CD4-positive, alpha-beta T cell (primary cell): ENCODE measurements at regions of chr4 and their contacts with region 1.

Region 1: DNA sequence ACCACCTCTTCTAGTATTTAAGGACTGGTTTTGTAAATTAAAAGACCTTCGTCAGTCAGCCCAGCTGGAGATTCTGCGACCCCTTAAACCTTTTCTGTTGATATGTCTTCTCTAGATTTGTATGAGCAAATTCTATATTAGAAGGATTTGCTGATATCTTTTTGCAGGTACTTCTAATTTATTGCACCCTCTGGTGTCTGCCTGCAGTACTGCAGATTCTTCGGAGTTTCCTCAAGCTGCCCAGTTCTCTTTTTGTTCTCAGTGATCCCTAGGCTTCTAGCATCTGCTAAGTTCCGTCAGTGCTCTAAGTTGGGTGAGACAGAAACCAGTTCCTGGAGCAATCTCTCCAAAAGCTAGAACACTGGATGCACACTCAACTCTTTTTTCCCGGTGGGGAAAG is 545.2 kb downstream of the C4orf33 start:
- DNase-seq: peak in 12 of 14 experiments; percentile 1 to 48 (median 15)
- ATAC-seq: no peak
- H3K4me3 ChIP-seq: no peak overlapping the region
- H3K4me3 Mint-ChIP-seq: no peak overlapping the region
- H3K27ac ChIP-seq: no peak overlapping the region
- H3K27ac Mint-ChIP-seq: no peak overlapping the region
- H3K4me1 ChIP-seq: no peaks in the 10 kb centered on the region
- H3K4me1 Mint-ChIP-seq: no peaks in the 10 kb centered on the region
- H3K27me3 ChIP-seq: no peaks in the 10 kb centered on the region
- H3K27me3 Mint-ChIP-seq: no peaks in the 10 kb centered on the region
- CTCF ChIP-seq: peak; percentile 66

Region 2: DNA sequence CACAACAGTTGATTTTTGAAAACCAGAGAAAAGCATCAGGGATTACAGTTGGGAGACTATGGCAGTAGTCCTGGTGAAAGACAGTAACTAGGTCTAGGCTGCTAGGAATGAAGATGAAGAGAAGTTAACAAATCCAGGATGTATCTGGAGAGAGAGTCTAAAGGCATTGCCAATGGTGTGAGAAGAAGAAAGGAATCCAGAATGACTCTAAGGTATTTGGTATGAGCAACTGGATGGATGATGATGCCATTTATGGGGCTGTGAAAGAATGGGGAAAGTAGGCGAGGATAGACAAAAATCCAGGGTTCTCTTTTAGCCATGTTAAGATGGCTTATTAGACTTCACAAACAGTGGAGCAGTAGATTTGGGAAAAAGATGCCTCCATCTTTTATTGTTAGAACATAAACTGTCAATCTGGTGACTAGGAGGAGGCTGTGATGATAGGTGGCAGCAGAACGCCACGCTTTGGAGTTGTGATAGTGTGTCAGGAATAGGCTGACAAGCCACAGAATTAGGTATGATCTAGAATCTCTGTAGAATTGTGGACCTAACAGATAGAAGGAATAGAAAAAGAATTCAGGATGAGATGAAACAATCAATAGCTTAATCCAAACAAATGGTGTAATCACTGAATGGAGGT is 859.0 kb before region 1 on chr4:
- CTCF ChIA-PET with region 1: no interaction called
- POLR2A ChIA-PET with region 1: no interaction called
- intact Hi-C with region 1: loop called in 1 of 2 experiments (anchors 5 kb)
- DNase-seq: peak; percentile 38 to 80 (median 60)
- ATAC-seq: peak; percentile 77
- H3K4me3 ChIP-seq: no peak overlapping the region
- H3K4me3 Mint-ChIP-seq: no peak overlapping the region
- H3K27ac ChIP-seq: no peak overlapping the region
- H3K27ac Mint-ChIP-seq: no peak overlapping the region
- H3K4me1 ChIP-seq: no peaks in the 10 kb centered on the region
- H3K4me1 Mint-ChIP-seq: no peaks in the 10 kb centered on the region
- H3K27me3 ChIP-seq: no peaks in the 10 kb centered on the region
- H3K27me3 Mint-ChIP-seq: no peaks in the 10 kb centered on the region
- CTCF ChIP-seq: peak; percentile 73

Region 3: GRCh38 chr4:129362674-129363274 is 278.4 kb before region 1 on chr4:
- CTCF ChIA-PET with region 1: interaction called, 4 read pairs
- POLR2A ChIA-PET with region 1: no interaction called
- intact Hi-C with region 1: loop called (anchors 2 kb)
- DNase-seq: peak in 12 of 14 experiments; percentile 0 to 71 (median 14)
- ATAC-seq: no peak
- H3K4me3 ChIP-seq: no peak overlapping the region
- H3K4me3 Mint-ChIP-seq: no peak overlapping the region
- H3K27ac ChIP-seq: no peak overlapping the region
- H3K27ac Mint-ChIP-seq: no peak overlapping the region
- H3K4me1 ChIP-seq: no peaks in the 10 kb centered on the region
- H3K4me1 Mint-ChIP-seq: no peaks in the 10 kb centered on the region
- H3K27me3 ChIP-seq: no peaks in the 10 kb centered on the region
- H3K27me3 Mint-ChIP-seq: peaks cover 5% of the 10 kb centered on the region
- CTCF ChIP-seq: peak; percentile 78

Region 4: GRCh38 chr4:129604632-129605255 is 36.4 kb before region 1 on chr4:
- CTCF ChIA-PET with region 1: no interaction called
- POLR2A ChIA-PET with region 1: no interaction called
- intact Hi-C with region 1: no loop called
- DNase-seq: no peak
- ATAC-seq: no peak
- H3K4me3 ChIP-seq: no peak overlapping the region
- H3K4me3 Mint-ChIP-seq: no peak overlapping the region
- H3K27ac ChIP-seq: no peak overlapping the region
- H3K27ac Mint-ChIP-seq: no peak overlapping the region
- H3K4me1 ChIP-seq: no peaks in the 10 kb centered on the region
- H3K4me1 Mint-ChIP-seq: no peaks in the 10 kb centered on the region
- H3K27me3 ChIP-seq: no peaks in the 10 kb centered on the region
- H3K27me3 Mint-ChIP-seq: no peaks in the 10 kb centered on the region
- CTCF ChIP-seq: no peak